ENCODE measurements at regions of chr11 and their contacts with region 1.

Region 1: GRCh38 chr11:45371251-45372115 is 85.3 kb upstream of the SYT13 start:
- DNase-seq: peak; percentile 76 to 95 (median 87)

Region 2: DNA sequence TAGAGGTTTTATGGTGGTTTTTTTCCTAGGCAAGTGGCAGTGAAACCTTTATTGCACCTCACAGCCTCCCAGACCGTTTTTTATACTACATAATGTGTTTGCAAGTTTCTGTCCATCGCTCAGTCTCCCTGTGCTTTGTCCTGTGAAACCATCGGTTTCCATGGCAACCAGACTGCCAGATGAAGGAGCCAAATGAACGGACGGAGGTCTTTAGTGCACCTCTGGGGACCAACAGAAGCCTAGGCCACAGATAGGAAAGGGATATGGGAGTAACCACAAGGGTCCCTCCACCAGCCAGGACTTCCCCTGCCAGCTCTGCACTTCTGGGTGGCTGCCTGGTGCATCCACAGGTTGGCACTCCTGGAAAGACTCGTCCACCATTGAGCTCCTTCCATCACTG is 129.0 kb after region 1 on chr11:
- intact Hi-C with region 1: no loop called
- DNase-seq: peak in 1 of 42 donors; percentile 14

Region 3: DNA sequence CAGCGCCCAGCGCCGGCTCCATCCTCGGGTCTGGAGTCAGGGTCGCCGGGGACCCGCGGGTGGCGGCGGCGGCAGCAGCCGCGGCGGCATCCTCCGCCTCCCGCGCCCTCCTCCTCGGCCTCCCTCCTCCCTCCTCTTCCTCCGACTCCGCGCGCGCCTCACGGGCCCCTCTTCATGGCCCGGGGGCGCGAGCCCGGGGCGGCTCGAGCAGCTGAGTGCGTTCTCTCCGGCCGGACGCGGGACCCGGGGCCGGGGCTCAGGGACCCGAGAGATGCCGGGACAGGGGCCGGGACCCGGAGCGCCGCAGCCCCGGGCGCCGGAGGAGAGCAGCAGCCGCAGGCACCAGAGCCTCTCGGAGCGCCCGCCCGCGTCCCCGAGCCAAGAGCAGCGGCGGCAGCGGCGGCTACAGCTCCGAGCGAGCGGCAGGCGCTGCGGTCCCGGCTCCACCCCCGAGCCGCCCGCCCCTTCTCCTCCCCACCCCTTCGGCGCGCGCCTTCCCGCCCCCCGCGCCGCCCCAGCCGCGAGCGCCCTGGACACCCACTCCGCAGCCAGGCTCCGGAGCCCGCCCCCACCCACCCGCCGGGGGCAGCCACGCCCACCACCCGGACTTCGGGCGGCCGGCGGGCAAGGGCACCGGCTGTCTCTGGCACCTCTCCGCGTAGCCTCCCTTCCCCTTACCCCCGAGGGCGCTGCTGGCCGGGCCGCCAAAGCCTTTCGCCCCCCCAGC is 293.9 kb after region 1 on chr11 and contains the start of gene CHST1:
- intact Hi-C with region 1: loop called (anchors 10 kb)
- DNase-seq: peak in 38 of 42 donors; percentile 44 to 86 (median 66)

Region 4: DNA sequence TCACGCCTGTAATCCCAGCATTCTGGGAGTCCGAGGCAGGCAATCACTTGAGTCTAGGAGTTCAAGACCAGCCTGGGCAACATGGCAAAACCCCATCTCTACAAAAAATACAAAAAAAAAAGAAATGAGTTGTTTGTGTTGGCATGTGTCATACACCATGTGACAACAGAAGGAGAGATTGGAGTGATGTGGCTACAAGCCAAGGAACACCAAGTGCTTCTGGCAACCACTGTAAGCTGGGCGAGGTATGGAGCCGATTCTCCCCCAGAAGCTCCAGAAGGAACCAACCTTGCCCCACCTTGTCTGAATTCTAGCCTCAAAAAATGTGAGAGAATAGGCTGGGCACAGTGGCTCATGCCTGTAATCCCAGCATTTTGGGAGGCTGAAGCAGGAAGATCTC is 394.4 kb after region 1 on chr11:
- intact Hi-C with region 1: loop called (anchors 5 kb)
- DNase-seq: peak in 1 of 42 donors; percentile 9

Measured in head of caudate nucleus (tissue), 42 donors.